ENCODE measurements at regions of chr19 and their contacts with region 1.

Region 1: DNA sequence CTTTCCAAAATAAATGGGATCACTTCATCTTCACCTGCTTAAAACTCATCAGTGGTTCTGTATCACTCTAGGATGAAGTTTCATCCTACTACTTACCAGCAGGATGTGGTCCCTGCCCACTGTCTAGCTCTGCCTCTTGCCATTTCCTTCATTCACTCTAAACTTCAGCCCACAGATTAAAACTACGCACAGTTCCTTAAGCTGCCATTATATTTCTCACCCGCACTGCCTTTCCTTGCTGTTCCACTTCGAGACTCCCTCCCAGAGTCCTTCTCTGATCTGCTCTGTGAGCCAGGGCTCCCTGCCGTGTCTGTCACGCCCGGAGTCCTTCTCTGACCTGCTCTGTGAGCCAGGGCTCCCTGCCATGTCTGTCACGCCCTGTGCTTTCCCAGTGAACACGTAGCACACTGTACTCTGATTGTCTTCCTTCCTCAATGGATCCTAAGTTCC is 52.0 kb upstream of the NPAS1 start:
- DNase-seq: peak in 1 of 2 donors; percentile 77
- ATAC-seq: peak; percentile 86 to 97 (median 92)
- H3K4me3 ChIP-seq: no peak overlapping the region
- H3K4me3 Mint-ChIP-seq: peak overlapping the region; percentile 77
- H3K27ac ChIP-seq: peak overlapping the region; percentile 15
- H3K27ac Mint-ChIP-seq: peak overlapping the region; percentile 65 to 67
- H3K4me1 ChIP-seq: peaks cover 30% of the 10 kb centered on the region
- H3K4me1 Mint-ChIP-seq: peaks cover 36 to 47% of the 10 kb centered on the region in 2 donors
- H3K27me3 ChIP-seq: no peaks in the 10 kb centered on the region
- H3K27me3 Mint-ChIP-seq: no peaks in the 10 kb centered on the region
- CTCF ChIP-seq: no peak

Region 2: GRCh38 chr19:46924874-46925547 is 42.6 kb before region 1 on chr19:
- intact Hi-C with region 1: loop called (anchors 5 kb)
- DNase-seq: peak in 1 of 2 donors; percentile 36
- ATAC-seq: peak; percentile 75 to 96 (median 88)
- H3K4me3 ChIP-seq: no peak overlapping the region
- H3K4me3 Mint-ChIP-seq: peak overlapping the region; percentile 91
- H3K27ac ChIP-seq: peak overlapping the region; percentile 48
- H3K27ac Mint-ChIP-seq: peak overlapping the region; percentile 78 to 86
- H3K4me1 ChIP-seq: peaks cover 19% of the 10 kb centered on the region
- H3K4me1 Mint-ChIP-seq: peaks cover 43 to 59% of the 10 kb centered on the region in 2 donors
- H3K27me3 ChIP-seq: no peaks in the 10 kb centered on the region
- H3K27me3 Mint-ChIP-seq: no peaks in the 10 kb centered on the region
- CTCF ChIP-seq: no peak

Measured in natural killer cell (primary cell).